ENCODE measurements at regions of chr1 and their contacts with region 1.

Region 1: DNA sequence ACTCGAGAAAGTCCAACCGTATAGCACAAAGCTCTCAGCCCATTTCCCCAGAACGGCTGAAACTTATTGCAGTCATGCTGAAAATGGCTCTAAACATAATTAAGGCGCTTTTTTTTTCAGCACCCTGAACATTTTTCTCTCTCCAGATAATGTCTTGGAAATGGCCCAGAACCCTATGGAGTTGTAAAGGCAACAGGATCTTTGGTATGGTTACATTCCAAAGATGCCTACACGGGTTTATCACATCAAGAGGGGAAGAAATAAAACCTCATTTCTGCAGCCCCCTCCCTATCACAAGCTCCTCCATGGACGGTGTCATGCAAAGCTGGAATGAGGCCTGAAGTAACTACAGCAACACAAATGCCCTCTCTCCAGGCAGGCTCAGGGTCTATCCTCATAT is 126.4 kb upstream of the GALNT2 start:
- DNase-seq: peak; percentile 86
- H3K4me3 ChIP-seq: no peak overlapping the region
- CTCF ChIP-seq: no peak

Region 2: DNA sequence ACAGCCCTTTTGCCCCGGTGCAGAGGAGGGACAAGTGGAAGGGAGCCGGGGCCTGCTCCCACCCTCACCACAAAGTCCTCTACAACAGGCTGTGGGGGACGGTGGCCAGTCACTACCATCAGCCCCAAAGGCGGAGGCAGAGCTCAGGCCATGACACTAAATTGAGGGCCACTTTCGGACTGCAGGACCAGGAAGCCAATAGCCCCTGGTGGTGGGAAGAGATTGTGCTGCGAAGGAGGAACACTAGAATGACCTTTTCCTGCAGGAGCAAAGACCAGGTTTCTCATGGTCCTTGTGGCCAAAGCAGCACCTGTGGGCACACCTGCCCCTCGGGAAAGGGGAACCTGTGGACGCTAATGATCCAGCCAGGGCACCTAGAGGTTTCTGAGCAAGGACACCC is 537.1 kb before region 1 on chr1:
- in situ Hi-C with region 1: no loop called
- DNase-seq: no peak
- H3K4me3 ChIP-seq: no peak overlapping the region
- CTCF ChIP-seq: no peak

Region 3: GRCh38 chr1:229887043-229887822 is 53.5 kb before region 1 on chr1:
- in situ Hi-C with region 1: loop called (anchors 10 kb)
- DNase-seq: no peak
- H3K4me3 ChIP-seq: no peak overlapping the region
- CTCF ChIP-seq: no peak

Region 4: DNA sequence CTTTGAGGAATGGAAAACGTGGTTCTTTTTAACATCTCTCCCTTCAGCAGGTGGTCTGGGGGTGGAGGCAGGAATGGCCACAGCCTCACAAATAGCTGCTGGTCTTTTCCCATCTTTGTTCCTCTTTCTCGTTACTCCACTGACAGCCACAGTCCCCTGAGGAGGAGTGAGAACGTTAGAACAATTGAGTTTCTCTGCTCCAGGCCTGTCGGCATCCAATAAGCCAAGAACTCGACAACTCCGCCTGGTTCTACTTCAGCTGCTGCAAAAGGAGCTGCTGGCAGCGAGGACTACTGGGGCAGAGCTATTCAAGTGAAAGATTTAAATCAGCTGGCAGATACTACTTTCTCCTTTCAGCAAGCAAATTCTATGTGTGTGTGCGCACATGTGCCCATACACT is 43.2 kb before region 1 on chr1:
- in situ Hi-C with region 1: no loop called
- DNase-seq: no peak
- H3K4me3 ChIP-seq: no peak overlapping the region
- CTCF ChIP-seq: no peak

Measured in astrocyte of the cerebellum (primary cell).